ENCODE measurements at regions of chr10 and their contacts with region 1.

Region 1: DNA sequence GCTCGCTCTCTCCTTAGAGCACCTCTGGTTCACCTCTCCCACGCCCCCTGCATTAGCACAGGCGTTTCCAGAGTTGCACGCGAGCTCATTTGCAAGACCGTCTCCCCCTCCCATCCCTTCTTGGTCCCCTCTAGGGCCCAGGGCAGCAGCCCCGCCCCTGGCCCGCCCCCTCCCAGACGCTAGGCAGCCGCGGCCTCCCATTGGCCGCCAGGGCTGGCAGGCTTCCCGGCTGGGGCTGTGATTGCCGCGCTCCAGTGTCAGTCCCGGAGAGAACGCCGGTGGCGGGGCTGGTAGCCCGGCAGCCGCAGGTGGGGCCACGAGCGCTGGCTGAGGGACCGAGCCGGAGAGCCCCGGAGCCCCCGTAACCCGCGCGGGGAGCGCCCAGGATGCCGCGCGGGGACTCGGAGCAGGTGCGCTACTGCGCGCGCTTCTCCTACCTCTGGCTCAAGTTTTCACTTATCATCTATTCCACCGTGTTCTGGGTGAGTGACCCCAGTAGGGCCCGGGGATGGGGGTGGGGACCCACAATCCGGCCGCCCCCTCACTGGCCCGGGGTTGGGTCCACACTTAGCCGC is at the start of gene TSPAN15:
- DNase-seq: no peak
- H3K4me3 ChIP-seq: peak within 1 kb of the TSS; percentile 48
- H3K27me3 ChIP-seq: peaks cover 6% of the 10 kb centered on the region
- CTCF ChIP-seq: no peak
- polyA plus RNA-seq, gene TSPAN15: 0.94 and 1.2 TPM in 2 replicates

Region 2: GRCh38 chr10:69439813-69440506 is 11.3 kb before region 1 on chr10:
- CTCF ChIA-PET with region 1: interaction called, 17 read pairs
- POLR2A ChIA-PET with region 1: interaction called, 3 read pairs
- DNase-seq: peak; percentile 40
- H3K4me3 ChIP-seq: no peak overlapping the region
- H3K27me3 ChIP-seq: no peaks in the 10 kb centered on the region
- CTCF ChIP-seq: no peak

Measured in BJ (cell line).